Common myeloid progenitor, CD34-positive (primary cell): ENCODE measurements at regions of chr17 and their contacts with region 1.

Region 1: DNA sequence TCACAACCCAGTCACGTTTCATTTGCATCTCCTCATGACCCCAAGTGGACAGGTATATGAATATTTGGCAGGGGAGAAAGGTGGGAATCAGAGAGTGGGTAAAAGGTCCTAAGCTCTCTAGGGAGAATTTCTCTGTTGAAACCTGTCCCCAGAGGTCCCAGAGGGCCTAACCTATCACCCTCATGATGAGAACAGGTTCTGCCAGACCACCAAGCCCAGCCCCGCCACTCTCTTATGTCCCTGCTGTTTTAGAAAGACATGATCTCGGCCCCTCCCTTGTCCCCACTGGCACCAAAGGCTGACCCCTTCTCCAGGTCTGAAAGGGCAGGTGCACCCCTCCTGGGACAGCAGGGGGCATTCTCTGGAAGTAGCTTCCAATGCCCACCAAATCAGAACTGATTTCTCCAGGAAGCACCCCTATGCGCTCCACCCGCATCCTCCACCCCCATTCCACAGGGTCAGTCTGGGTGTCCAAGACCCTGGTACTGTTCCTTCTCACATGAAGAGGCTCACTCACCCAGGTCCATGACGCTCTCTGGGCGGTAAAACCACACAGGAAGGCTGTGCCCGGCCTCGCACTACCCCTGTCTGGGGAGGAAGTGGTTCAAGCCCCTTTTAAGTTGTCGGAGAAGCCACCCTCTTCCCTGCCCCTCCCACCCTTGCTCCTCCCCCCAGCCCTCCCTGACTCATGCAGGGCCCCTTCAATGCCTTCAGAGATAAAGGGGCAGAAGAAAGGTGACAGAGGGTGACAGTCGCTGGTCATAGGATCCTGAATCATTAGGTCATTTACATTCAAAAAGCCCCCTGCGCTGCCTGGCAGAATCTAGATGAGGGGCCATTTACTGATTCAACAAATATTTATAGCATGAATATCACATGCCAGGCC is at the start of gene CCR7:
- DNase-seq: peak; percentile 77 to 96 (median 93)
- H3K4me3 ChIP-seq: peak within 1 kb of the TSS in 6 of 7 experiments; percentile 23 to 57 (median 30)
- H3K27ac ChIP-seq: peak within 1 kb of the TSS in 1 of 2 experiments; percentile 71
- H3K4me1 ChIP-seq: peaks cover 9 to 47% (median 29%) of the 10 kb centered on the region in 4 experiments
- H3K27me3 ChIP-seq: peaks cover 0 to 4% (median 0%) of the 10 kb centered on the region in 5 experiments

Region 2: DNA sequence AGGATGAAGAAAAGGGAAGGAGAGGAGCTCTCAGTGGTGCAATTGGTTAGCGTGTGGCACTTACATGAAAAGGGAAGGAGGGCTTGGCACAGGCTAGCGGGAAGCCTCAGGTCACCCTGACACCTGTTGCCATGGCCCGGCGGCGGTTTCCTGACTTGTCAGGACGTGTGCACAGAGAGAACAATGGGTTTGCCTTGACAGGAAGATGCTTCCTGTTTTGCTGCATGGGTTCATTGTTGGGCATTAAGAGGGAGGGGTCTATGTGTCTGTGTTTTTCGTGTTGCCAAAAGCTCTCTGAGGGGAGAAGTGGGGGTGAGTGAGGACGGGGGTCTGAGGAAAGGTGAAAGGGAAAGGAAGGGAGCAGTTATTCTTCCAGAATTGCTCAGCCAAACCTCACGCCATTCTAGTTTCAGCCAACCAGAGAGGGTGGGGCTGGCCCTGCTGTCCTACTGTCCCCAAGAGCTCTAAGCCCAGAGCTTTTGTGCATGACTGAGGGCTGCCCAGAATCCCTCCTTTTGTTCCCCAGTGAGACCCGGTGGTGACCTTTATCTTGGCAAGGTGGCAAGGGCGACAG is 17.3 kb after region 1 on chr17:
- CTCF ChIA-PET with region 1: interaction called, 25 read pairs
- POLR2A ChIA-PET with region 1: interaction called, 17 read pairs
- DNase-seq: peak; percentile 82 to 99 (median 97)
- H3K4me3 ChIP-seq: peak overlapping the region in 4 of 7 experiments; percentile 5 to 60 (median 24)
- H3K27ac ChIP-seq: peak overlapping the region; percentile 61 to 76
- H3K4me1 ChIP-seq: peaks cover 15 to 35% (median 26%) of the 10 kb centered on the region in 4 experiments
- H3K27me3 ChIP-seq: no peaks in the 10 kb centered on the region

Region 3: DNA sequence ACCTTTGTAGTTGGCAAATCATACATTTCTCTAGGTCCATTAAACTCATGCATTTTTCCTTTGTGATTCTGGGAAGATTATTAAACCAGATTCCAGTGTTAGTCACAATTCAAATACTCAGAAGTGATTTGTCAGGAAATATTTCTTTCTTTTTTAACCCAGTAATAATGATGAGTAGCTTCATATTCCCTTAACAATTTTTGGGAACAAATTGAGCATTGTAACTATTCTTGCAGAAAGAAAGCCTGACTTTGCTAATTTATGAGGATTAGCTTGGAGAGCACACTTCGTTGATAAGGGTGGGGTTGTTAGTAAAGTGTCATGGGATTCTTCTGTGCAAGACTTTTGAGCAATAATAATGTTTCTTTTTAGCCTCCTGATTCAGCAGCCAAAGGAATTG is 157.1 kb after region 1 on chr17:
- CTCF ChIA-PET with region 1: no interaction called
- POLR2A ChIA-PET with region 1: no interaction called
- DNase-seq: no peak
- H3K4me3 ChIP-seq: no peak overlapping the region
- H3K27ac ChIP-seq: no peak overlapping the region
- H3K4me1 ChIP-seq: no peaks in the 10 kb centered on the region
- H3K27me3 ChIP-seq: peaks cover 6 to 44% (median 13%) of the 10 kb centered on the region in 5 experiments